ENCODE measurements at regions of chr12 and their contacts with region 1.

Region 1: GRCh38 chr12:21823581-21823980 is 49.1 kb upstream of the KCNJ8 start:
- DNase-seq: peak; percentile 93

Region 2: GRCh38 chr12:21773263-21773741 is 50.3 kb before region 1 on chr12:
- intact Hi-C with region 1: loop called in 1 of 2 experiments (anchors 10 kb)
- DNase-seq: peak; percentile 86

Region 3: DNA sequence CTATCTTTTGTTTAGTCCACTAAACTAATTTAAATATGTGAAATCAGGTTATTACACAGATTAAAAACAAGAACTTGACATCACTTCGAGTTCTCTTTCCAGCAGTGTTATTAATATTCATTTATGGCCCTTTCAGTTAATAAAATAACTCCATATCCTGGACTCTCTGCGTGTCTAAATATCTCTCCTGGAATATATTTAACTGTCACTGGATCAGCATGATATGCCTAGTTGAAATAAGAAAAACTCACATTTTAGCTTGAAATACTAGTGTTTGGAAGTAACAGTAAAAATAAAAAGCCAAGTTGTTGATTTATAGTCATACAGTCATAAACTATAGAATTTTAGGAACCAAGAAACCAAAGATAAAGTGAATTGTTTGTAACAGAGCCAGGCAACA is 72.1 kb after region 1 on chr12:
- intact Hi-C with region 1: no loop called
- DNase-seq: no peak

Region 4: DNA sequence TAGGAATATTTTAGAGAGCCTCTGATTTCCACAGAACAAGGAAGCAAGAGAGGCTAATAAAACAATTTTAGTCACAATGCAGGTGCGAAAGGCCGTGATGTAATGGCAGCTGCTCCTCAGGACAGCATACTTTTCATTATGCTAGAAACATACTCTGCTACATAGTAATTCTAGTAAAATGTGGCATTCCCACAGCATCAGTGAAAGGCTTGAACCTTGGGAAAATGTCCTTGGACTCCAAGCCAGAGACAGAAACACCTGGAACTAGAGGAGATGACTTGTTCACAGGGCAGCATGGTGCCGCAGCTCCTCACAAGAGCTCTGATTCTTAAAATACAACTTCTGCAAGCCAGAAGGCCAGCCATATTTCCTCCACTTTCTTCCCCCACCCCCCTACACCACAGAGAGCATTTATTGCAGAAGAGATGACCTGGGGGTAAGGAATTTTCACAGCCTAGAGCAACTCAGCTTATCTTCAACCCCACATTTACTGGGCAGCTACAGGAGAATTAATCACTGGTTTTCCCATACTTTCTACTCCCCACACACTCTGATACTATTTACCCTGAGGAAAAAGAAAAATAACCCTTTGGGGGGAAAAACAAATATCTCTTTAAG is 101.8 kb after region 1 on chr12:
- intact Hi-C with region 1: no loop called
- DNase-seq: no peak